Prostate gland (tissue), 2 donors: ENCODE measurements at regions of chr9 and their contacts with region 1.

Region 1: GRCh38 chr9:121557581-121558447 is 58.2 kb upstream of the GGTA1 start:
- DNase-seq: peak; percentile 42
- H3K4me3 ChIP-seq: no peak overlapping the region
- H3K27ac ChIP-seq: peak overlapping the region; percentile 30 to 55
- H3K4me1 ChIP-seq: no peaks in the 10 kb centered on the region
- H3K27me3 ChIP-seq: no peaks in the 10 kb centered on the region
- CTCF ChIP-seq: no peak
- POLR2A ChIP-seq: no peak

Region 2: DNA sequence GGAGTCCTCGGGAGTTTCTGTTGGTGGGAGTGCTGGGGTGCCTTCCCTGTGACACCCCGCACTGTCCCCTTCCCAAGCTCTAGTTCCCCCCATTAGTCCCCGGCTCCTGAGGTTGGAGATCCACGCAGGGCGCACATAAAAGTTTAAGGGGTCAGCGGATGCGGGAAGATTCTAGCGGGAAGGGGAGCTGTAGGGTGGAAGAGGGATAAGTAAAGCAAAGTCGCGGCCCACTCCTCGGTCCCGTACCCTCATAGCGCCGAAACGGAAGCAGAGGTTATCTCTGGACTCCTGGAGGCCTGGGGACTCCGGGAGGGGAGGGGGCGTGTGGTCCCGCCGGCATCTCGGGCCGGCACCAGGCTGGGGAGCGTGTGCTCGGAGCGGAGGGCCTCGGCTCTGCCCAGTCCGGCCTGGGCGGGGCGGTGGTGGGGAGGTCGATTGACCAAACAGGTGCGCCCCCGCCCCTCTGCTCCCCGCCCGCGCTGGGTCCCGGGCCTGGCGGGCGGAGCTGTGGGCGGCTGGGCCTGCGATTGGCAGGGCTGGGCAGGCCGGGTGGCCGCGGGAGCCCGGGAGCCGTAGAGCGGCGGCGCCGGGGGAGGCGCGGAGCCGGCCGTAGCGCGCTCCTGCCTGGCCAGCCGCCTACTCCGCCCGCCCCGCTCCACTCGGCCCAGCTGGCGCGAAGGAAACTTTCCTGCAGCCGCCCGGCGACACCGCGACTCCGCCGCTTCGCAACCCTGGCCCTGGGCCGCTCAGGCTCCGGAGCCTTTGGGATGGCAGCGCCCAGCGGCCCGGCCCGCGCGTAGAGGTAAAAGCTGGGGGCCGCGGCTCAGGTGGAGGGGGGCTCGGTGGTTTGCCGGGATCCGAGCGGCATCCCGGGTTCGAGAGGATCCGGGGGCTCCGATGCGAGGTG is 41.4 kb after region 1 on chr9:
- intact Hi-C with region 1: loop called (anchors 2 kb)
- DNase-seq: peak; percentile 82
- H3K4me3 ChIP-seq: peak overlapping the region; percentile 51 to 53
- H3K27ac ChIP-seq: peak overlapping the region; percentile 91 to 93
- H3K4me1 ChIP-seq: peaks cover 9% of the 10 kb centered on the region
- H3K27me3 ChIP-seq: no peaks in the 10 kb centered on the region
- CTCF ChIP-seq: peak in 1 of 4 experiments; percentile 10
- POLR2A ChIP-seq: peak; percentile 45